ENCODE measurements at regions of chr9 and their contacts with region 1.

Region 1: GRCh38 chr9:13213337-13213736 is 66.2 kb downstream of the MPDZ start:
- DNase-seq: peak; percentile 44
- H3K4me3 ChIP-seq: no peak overlapping the region
- H3K27ac ChIP-seq: no peak overlapping the region
- H3K4me1 ChIP-seq: peaks cover 27% of the 10 kb centered on the region
- H3K27me3 ChIP-seq: no peaks in the 10 kb centered on the region
- CTCF ChIP-seq: peak in 1 of 2 donors; percentile 22
- POLR2A ChIP-seq: no peak

Region 2: DNA sequence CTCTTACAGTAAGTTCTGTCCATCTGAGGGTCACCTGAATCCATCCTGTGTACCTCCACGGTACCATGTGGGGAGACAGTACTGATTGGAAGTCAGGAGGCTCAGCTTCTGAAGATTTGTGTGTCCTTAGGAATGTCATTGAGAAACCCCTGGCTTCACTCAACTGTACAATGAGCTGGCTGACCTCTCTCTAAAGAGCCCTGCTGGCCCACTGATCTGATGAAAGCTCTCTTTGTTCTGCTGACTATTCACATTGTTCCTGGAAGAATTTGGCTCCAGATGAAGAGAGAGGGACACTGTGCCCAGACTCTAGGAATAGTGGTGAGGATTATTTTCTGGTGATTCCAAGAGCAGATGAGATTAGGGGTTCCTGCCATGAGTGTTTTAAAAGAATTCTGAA is 297.3 kb before region 1 on chr9:
- CTCF ChIA-PET with region 1: no interaction called
- POLR2A ChIA-PET with region 1: no interaction called
- dilution Hi-C with region 1: no loop called
- intact Hi-C with region 1: no loop called
- DNase-seq: no peak
- H3K4me3 ChIP-seq: no peak overlapping the region
- H3K27ac ChIP-seq: no peak overlapping the region
- H3K4me1 ChIP-seq: no peaks in the 10 kb centered on the region
- H3K27me3 ChIP-seq: no peaks in the 10 kb centered on the region
- CTCF ChIP-seq: no peak
- POLR2A ChIP-seq: no peak

Region 3: DNA sequence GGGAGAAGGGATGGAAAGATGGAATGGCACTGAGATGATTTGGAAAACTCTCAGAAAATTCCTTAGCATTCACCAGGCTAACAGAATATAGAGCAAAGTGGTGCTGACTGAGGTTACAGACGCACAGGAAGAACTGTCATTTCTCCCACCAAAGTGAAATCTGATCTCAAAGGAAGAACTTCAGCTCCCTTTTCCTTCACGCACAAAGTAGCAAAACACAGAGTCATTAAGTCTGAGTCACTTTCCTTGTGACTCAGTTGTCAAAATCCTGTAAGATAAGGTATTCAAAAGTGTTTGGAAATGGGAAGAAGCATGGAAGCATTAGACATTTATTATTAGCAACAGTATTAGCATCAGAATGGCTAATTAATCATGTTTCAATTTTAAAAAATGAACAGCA is 54.4 kb after region 1 on chr9:
- CTCF ChIA-PET with region 1: interaction called, 4 read pairs
- POLR2A ChIA-PET with region 1: no interaction called
- dilution Hi-C with region 1: no loop called
- intact Hi-C with region 1: loop called (anchors 1 kb)
- DNase-seq: peak; percentile 97
- H3K4me3 ChIP-seq: peak overlapping the region in 1 of 3 experiments; percentile 48
- H3K27ac ChIP-seq: peak overlapping the region; percentile 88
- H3K4me1 ChIP-seq: peaks cover 62% of the 10 kb centered on the region
- H3K27me3 ChIP-seq: no peaks in the 10 kb centered on the region
- CTCF ChIP-seq: no peak
- POLR2A ChIP-seq: peak; percentile 69

Region 4: GRCh38 chr9:13330396-13331004 is 117.2 kb after region 1 on chr9:
- CTCF ChIA-PET with region 1: no interaction called
- POLR2A ChIA-PET with region 1: no interaction called
- dilution Hi-C with region 1: no loop called
- intact Hi-C with region 1: loop called (anchors 2 kb)
- DNase-seq: peak; percentile 91
- H3K4me3 ChIP-seq: no peak overlapping the region
- H3K27ac ChIP-seq: no peak overlapping the region
- H3K4me1 ChIP-seq: peaks cover 12% of the 10 kb centered on the region
- H3K27me3 ChIP-seq: no peaks in the 10 kb centered on the region
- CTCF ChIP-seq: no peak
- POLR2A ChIP-seq: no peak

Region 5: GRCh38 chr9:13410566-13411031 is 197.3 kb after region 1 on chr9:
- CTCF ChIA-PET with region 1: no interaction called
- POLR2A ChIA-PET with region 1: no interaction called
- dilution Hi-C with region 1: no loop called
- intact Hi-C with region 1: loop called (anchors 5 kb)
- DNase-seq: peak; percentile 80
- H3K4me3 ChIP-seq: no peak overlapping the region
- H3K27ac ChIP-seq: no peak overlapping the region
- H3K4me1 ChIP-seq: no peaks in the 10 kb centered on the region
- H3K27me3 ChIP-seq: peaks cover 7 to 14% of the 10 kb centered on the region in 2 experiments
- CTCF ChIP-seq: no peak
- POLR2A ChIP-seq: no peak

Region 6: GRCh38 chr9:14428781-14429230 is 1215.5 kb after region 1 on chr9:
- CTCF ChIA-PET with region 1: no interaction called
- POLR2A ChIA-PET with region 1: no interaction called
- dilution Hi-C with region 1: no loop called
- intact Hi-C with region 1: loop called (anchors 5 kb)
- DNase-seq: peak; percentile 68
- H3K4me3 ChIP-seq: no peak overlapping the region
- H3K27ac ChIP-seq: no peak overlapping the region
- H3K4me1 ChIP-seq: peaks cover 15% of the 10 kb centered on the region
- H3K27me3 ChIP-seq: no peaks in the 10 kb centered on the region
- CTCF ChIP-seq: peak; percentile 79 to 84
- POLR2A ChIP-seq: no peak